ENCODE measurements at regions of chr5 and their contacts with region 1.

Region 1: GRCh38 chr5:157328277-157328912 is 62.5 kb downstream of the CYFIP2 start:
- DNase-seq: peak; percentile 73
- ATAC-seq: peak; percentile 98
- H3K4me3 ChIP-seq: no peak overlapping the region; a peak in 1 of 6 replicates
- H3K27ac ChIP-seq: no peak overlapping the region
- H3K4me1 ChIP-seq: peaks cover 36% of the 10 kb centered on the region
- H3K27me3 ChIP-seq: no peaks in the 10 kb centered on the region
- CTCF ChIP-seq: peak; percentile 92
- EP300 ChIP-seq: no peak
- POLR2A ChIP-seq: no peak
- RAD21 ChIP-seq: peak; percentile 63

Region 2: GRCh38 chr5:157241483-157241882 is 86.9 kb before region 1 on chr5:
- CTCF ChIA-PET with region 1: no interaction called
- POLR2A ChIA-PET with region 1: no interaction called
- in situ Hi-C with region 1: no loop called
- intact Hi-C with region 1: no loop called
- DNase-seq: no peak
- ATAC-seq: no peak
- H3K4me3 ChIP-seq: no peak overlapping the region
- H3K27ac ChIP-seq: no peak overlapping the region
- H3K4me1 ChIP-seq: no peaks in the 10 kb centered on the region
- H3K27me3 ChIP-seq: peaks cover 2 to 15% of the 10 kb centered on the region in 2 experiments; a peak in 2 of 5 replicates
- CTCF ChIP-seq: no peak
- EP300 ChIP-seq: no peak
- POLR2A ChIP-seq: no peak
- RAD21 ChIP-seq: no peak

Region 3: DNA sequence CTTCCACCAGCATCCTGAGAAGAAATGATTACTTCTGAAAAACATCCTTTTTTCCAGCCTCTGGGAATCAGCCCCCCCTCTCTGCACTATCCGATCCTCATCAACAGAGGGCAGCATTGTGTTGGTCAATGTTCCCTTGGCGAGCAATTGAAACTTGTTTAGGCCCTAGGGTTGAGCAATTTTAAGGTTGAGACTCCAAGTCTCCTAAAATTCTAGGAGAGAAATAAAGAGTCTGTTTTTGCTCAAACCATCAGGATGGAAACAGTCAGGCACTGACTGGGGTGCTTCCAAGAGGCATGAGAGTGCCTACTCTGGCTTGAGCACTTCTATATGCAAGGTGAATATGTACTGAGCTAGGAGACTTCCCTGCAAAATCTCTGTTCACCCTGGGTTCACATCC is 74.8 kb before region 1 on chr5:
- CTCF ChIA-PET with region 1: interaction called, 6 read pairs
- POLR2A ChIA-PET with region 1: no interaction called
- in situ Hi-C with region 1: no loop called
- intact Hi-C with region 1: loop called (anchors 5 kb)
- DNase-seq: peak; percentile 35
- ATAC-seq: peak; percentile 87
- H3K4me3 ChIP-seq: no peak overlapping the region
- H3K27ac ChIP-seq: no peak overlapping the region
- H3K4me1 ChIP-seq: no peaks in the 10 kb centered on the region
- H3K27me3 ChIP-seq: no peaks in the 10 kb centered on the region; a peak in 1 of 5 replicates
- CTCF ChIP-seq: peak; percentile 86
- EP300 ChIP-seq: no peak
- POLR2A ChIP-seq: no peak
- RAD21 ChIP-seq: peak; percentile 80

Measured in HepG2 (cell line).